Ovary (tissue), 10 donors: ENCODE measurements at regions of chr6 and their contacts with region 1.

Region 1: DNA sequence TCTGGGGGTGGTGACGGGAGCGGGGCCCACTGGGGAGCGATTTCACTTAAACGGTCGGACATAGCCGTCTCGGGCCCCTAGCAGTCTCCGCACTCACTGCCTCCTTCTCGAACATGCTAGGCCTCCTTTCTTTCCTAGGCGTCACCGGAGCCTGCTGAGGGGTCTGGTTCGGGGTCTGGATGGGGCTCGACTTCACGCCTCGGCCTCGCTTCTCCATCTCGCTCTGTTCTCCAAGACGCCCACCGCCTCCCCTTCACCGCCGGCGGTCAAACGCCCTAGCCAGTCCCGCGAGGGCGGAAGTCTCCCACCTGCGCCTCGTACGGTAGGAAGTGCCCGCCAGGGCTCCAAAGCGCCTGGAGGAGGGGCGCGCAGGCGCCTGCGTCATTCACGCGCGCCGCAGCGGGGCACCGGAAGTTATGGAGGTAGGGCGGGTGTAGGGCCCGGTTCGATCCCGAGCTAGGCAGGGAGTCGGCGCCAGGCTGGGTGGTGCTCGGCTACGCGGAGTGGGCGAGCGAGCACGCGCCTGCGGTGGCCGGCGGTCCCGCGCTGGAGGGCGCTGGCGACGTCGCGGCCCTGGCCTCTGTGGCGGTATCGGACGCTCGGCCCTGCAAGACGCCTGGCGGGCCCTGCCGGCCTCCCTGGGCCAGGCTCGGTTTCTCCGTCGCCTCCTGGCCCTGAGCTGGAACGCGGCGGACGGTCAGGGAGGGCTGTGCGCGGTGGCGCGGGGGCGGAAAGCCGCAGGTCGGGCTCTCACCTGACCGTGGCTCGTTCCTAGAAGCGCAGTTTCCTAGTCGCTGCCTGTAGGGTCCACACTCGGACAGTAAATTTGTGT is at the starts of genes DYNLT2 and ERMARD:
- DNase-seq: peak; percentile 92 to 97 (median 94)
- H3K4me3 ChIP-seq: peak within 1 kb of the TSS; percentile 79
- H3K27ac ChIP-seq: peak within 1 kb of the TSS; percentile 96 to 97
- H3K4me1 ChIP-seq: peaks cover 3% of the 10 kb centered on the region
- H3K27me3 ChIP-seq: no peaks in the 10 kb centered on the region
- CTCF ChIP-seq: peak in 2 of 3 donors; percentile 59 to 65
- EP300 ChIP-seq: no peak
- POLR2A ChIP-seq: peak; percentile 91
- total RNA-seq, gene DYNLT2: 2.0 to 4.6 (median 3.1) TPM
- total RNA-seq, gene ERMARD: 15.9 to 38.0 (median 27.0) TPM

Region 2: GRCh38 chr6:170554013-170554795 is 802.7 kb after region 1 on chr6 and contains the start of gene TBP:
- intact Hi-C with region 1: loop called in 1 of 4 experiments (anchors 5 kb)
- DNase-seq: peak; percentile 95 to 98 (median 96)
- H3K4me3 ChIP-seq: peak within 1 kb of the TSS; percentile 84
- H3K27ac ChIP-seq: peak within 1 kb of the TSS; percentile 47 to 85
- H3K4me1 ChIP-seq: peaks cover 7% of the 10 kb centered on the region
- H3K27me3 ChIP-seq: no peaks in the 10 kb centered on the region
- CTCF ChIP-seq: no peak
- EP300 ChIP-seq: no peak
- POLR2A ChIP-seq: peak; percentile 61
- total RNA-seq, gene TBP: 12.7 to 17.0 (median 14.1) TPM